ENCODE measurements at regions of chr12 and their contacts with region 1.

Region 1: DNA sequence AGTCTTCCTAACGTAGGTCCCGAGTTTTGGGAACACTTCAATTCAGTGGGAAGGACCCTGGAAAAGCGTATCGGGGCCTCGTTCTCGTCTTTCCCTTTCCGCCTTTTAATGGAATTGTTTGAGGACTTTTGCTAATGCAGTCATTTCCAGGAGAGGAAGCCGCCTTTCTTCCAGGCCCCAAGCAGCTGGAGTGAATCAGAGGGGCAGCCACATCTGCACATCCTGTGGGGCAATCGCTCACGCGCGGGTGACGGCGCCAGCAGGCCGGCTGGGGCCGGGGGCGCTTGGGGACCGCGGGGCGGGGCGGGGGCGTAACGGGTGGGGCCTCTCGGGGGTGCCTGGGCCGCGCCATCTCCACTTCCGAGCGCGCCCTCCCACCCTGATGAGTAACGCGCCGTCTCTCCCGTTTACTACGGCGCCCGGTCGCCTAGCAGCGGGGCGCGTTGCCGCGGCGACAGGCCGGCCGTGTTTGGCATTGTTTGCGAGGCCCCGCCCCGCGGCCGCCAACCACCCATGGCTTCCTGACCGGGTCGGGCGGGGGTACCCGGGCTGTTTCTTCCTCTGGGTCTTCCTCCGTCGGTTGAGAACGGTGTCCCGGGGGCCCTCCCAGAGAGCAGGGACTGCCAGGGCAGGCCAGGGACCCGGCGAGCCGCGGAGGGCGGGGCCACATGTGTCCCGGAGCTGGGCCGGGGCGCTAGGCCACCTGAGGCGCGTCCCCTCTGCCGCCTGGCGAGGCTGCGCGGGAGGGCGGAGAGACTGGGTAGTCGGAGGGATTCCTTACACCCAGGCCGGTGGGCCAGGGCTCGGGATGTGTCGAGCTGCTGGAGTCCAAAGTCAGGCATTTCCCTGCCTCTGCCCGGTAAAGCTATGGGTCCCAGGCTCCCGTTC is 2.3 kb downstream of the GSG1 start:
- DNase-seq: peak; percentile 92 to 96 (median 94)
- ATAC-seq: peak; percentile 93
- H3K4me3 ChIP-seq: peak overlapping the region; percentile 68
- H3K4me3 Mint-ChIP-seq: peak overlapping the region; percentile 82 to 87 (median 84)
- H3K27ac ChIP-seq: peak overlapping the region; percentile 92
- H3K27ac Mint-ChIP-seq: peak overlapping the region; percentile 85 to 99 (median 95)
- H3K4me1 ChIP-seq: peaks cover 6 to 32% of the 10 kb centered on the region in 2 donors
- H3K4me1 Mint-ChIP-seq: peaks cover 24 to 49% (median 43%) of the 10 kb centered on the region in 7 donors
- H3K27me3 ChIP-seq: no peaks in the 10 kb centered on the region
- H3K27me3 Mint-ChIP-seq: peaks cover 0 to 5% (median 0%) of the 10 kb centered on the region in 5 donors

Region 2: GRCh38 chr12:11545484-11546330 is 1555.4 kb before region 1 on chr12:
- CTCF ChIA-PET with region 1: no interaction called
- POLR2A ChIA-PET with region 1: no interaction called
- intact Hi-C with region 1: loop called in 1 of 2 experiments (anchors 5 kb)
- DNase-seq: peak in 8 of 9 donors; percentile 50 to 87 (median 81)
- ATAC-seq: peak; percentile 87
- H3K4me3 ChIP-seq: peak overlapping the region; percentile 50
- H3K4me3 Mint-ChIP-seq: peak overlapping the region; percentile 74 to 84 (median 80)
- H3K27ac ChIP-seq: peak overlapping the region; percentile 81
- H3K27ac Mint-ChIP-seq: peak overlapping the region; percentile 92 to 99 (median 96)
- H3K4me1 ChIP-seq: peaks cover 28 to 69% of the 10 kb centered on the region in 2 donors
- H3K4me1 Mint-ChIP-seq: peaks cover 31 to 88% (median 68%) of the 10 kb centered on the region in 7 donors
- H3K27me3 ChIP-seq: no peaks in the 10 kb centered on the region
- H3K27me3 Mint-ChIP-seq: peaks cover 0 to 5% (median 0%) of the 10 kb centered on the region in 5 donors

Region 3: DNA sequence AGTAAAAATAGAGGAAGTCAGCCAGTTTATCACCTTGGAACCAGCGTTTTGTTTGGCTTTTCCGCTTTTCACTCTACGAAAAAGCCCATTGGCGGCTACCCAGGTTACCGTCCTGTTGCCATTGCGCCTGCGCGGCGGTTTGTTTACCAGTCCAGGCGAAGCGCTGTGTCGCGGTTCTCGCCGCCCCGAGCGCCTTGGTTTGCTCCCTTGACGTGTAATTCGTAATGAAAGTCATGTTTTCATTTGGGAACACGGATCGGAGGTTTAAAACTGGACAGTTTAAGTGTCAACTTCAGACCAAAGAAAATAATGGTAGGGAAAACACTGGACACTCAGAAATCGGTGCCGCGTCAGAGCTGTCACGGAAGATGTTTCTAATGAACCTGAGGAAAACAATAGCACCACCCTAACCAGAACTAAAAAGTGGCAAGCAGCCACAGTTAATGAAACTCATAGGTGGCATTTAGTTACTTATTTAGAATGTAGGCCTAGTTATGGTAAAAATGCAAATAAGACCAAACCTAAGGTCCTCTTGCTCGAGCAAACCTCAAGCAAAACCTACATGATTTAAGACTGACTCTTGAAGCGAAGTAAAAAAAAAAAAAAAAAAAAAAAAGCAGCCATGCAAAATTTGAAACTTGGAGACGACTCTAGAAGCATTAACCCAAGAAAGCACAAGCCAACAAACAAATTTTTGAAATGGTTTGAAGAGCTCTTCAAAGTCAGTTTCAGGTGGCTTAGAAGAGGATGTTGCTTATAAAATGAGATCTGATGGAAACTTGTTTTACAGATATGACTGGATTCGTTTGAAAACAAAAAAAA is 404.4 kb before region 1 on chr12:
- CTCF ChIA-PET with region 1: no interaction called
- POLR2A ChIA-PET with region 1: no interaction called
- intact Hi-C with region 1: loop called in 1 of 2 experiments (anchors 1 kb)
- DNase-seq: peak; percentile 86 to 97 (median 92)
- ATAC-seq: peak; percentile 92
- H3K4me3 ChIP-seq: peak overlapping the region; percentile 63
- H3K4me3 Mint-ChIP-seq: peak overlapping the region; percentile 79 to 99 (median 95)
- H3K27ac ChIP-seq: peak overlapping the region; percentile 93
- H3K27ac Mint-ChIP-seq: peak overlapping the region; percentile 95 to 100 (median 100)
- H3K4me1 ChIP-seq: peaks cover 11 to 16% of the 10 kb centered on the region in 2 donors
- H3K4me1 Mint-ChIP-seq: peaks cover 24 to 63% (median 33%) of the 10 kb centered on the region in 7 donors
- H3K27me3 ChIP-seq: no peaks in the 10 kb centered on the region
- H3K27me3 Mint-ChIP-seq: no peaks in the 10 kb centered on the region

Region 4: GRCh38 chr12:12845025-12845787 is 255.9 kb before region 1 on chr12:
- CTCF ChIA-PET with region 1: no interaction called
- POLR2A ChIA-PET with region 1: no interaction called
- intact Hi-C with region 1: loop called in 1 of 2 experiments (anchors 5 kb)
- DNase-seq: no peak
- ATAC-seq: no peak
- H3K4me3 ChIP-seq: no peak overlapping the region
- H3K4me3 Mint-ChIP-seq: peak overlapping the region in 3 of 10 donors; percentile 32 to 56 (median 53)
- H3K27ac ChIP-seq: no peak overlapping the region
- H3K27ac Mint-ChIP-seq: peak overlapping the region in 7 of 9 donors; percentile 38 to 87 (median 78)
- H3K4me1 ChIP-seq: peaks cover 0 to 31% of the 10 kb centered on the region in 2 donors
- H3K4me1 Mint-ChIP-seq: peaks cover 14 to 50% (median 36%) of the 10 kb centered on the region in 7 donors
- H3K27me3 ChIP-seq: no peaks in the 10 kb centered on the region
- H3K27me3 Mint-ChIP-seq: no peaks in the 10 kb centered on the region

Region 5: DNA sequence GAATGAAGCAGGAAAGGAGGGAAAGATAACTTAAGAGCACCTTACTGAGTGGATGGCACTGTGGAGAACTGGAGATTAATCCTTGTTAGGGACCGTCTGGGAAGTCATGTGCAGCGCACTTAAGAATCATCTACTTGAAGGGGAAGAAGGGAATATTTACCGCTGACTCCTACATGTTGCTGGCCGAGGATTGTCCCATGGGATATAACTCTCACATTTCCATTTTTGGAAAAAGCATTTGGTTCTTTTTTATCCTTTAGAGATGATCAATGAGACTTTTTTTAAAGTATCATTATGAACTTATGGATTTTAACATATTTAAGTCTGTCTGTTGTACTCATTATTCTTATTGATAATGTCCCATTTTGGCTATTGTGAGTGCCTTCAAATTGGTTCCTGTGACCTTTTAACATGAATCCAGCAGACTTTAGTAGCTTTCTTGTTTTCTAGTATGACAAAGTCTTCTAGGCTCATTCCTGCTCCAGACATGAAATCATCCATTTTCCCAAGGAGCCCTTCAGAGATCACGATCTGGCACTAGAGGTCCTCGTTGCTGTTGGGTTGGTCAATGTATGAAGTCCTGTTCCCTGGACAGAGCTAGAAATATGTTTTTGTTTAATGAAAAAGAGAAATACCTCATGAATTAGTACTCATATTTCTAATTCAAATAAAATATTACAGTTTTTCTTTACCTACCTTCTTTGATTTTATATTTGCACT is 77.2 kb before region 1 on chr12:
- CTCF ChIA-PET with region 1: no interaction called
- POLR2A ChIA-PET with region 1: no interaction called
- intact Hi-C with region 1: no loop called
- DNase-seq: no peak
- ATAC-seq: peak; percentile 36
- H3K4me3 ChIP-seq: no peak overlapping the region
- H3K4me3 Mint-ChIP-seq: no peak overlapping the region
- H3K27ac ChIP-seq: no peak overlapping the region
- H3K27ac Mint-ChIP-seq: no peak overlapping the region
- H3K4me1 ChIP-seq: no peaks in the 10 kb centered on the region
- H3K4me1 Mint-ChIP-seq: no peaks in the 10 kb centered on the region
- H3K27me3 ChIP-seq: no peaks in the 10 kb centered on the region
- H3K27me3 Mint-ChIP-seq: peaks cover 3 to 30% (median 7%) of the 10 kb centered on the region in 5 donors

Region 6: DNA sequence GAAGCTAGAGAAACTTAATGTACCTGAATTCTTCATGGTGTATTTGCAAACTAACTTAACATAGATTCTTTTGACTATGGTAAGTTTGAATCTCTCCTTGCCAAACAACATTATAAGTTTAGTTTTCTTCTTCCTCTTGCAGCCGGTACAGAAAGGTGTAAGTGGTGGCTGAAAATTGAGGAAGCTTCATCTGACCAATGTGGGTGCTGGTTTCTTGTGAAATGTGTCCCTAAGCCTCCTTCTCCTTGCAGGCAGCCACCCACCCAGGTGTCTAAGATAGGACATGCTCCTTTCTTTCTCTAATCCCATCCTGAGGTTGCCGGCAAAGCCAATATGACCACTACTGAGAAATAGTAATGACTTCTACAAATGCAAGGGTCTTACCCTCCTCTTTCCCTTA is 18.3 kb before region 1 on chr12:
- CTCF ChIA-PET with region 1: no interaction called
- POLR2A ChIA-PET with region 1: no interaction called
- intact Hi-C with region 1: no loop called
- DNase-seq: no peak
- ATAC-seq: no peak
- H3K4me3 ChIP-seq: no peak overlapping the region
- H3K4me3 Mint-ChIP-seq: no peak overlapping the region
- H3K27ac ChIP-seq: no peak overlapping the region
- H3K27ac Mint-ChIP-seq: no peak overlapping the region
- H3K4me1 ChIP-seq: no peaks in the 10 kb centered on the region
- H3K4me1 Mint-ChIP-seq: peaks cover 0 to 3% (median 0%) of the 10 kb centered on the region in 7 donors
- H3K27me3 ChIP-seq: no peaks in the 10 kb centered on the region
- H3K27me3 Mint-ChIP-seq: no peaks in the 10 kb centered on the region

Region 7: GRCh38 chr12:13165617-13166041 is 64.5 kb after region 1 on chr12:
- CTCF ChIA-PET with region 1: interaction called, 6 read pairs
- POLR2A ChIA-PET with region 1: interaction called, 3 read pairs
- intact Hi-C with region 1: loop called in 1 of 2 experiments (anchors 1 kb)
- DNase-seq: peak; percentile 14 to 60 (median 46)
- ATAC-seq: peak; percentile 82
- H3K4me3 ChIP-seq: no peak overlapping the region
- H3K4me3 Mint-ChIP-seq: peak overlapping the region; percentile 5 to 63 (median 50)
- H3K27ac ChIP-seq: peak overlapping the region; percentile 1
- H3K27ac Mint-ChIP-seq: peak overlapping the region; percentile 11 to 82 (median 76)
- H3K4me1 ChIP-seq: peaks cover 13 to 24% of the 10 kb centered on the region in 2 donors
- H3K4me1 Mint-ChIP-seq: peaks cover 16 to 35% (median 23%) of the 10 kb centered on the region in 7 donors
- H3K27me3 ChIP-seq: no peaks in the 10 kb centered on the region
- H3K27me3 Mint-ChIP-seq: peaks cover 0 to 24% (median 0%) of the 10 kb centered on the region in 5 donors

Region 8: GRCh38 chr12:14167005-14167628 is 1066.0 kb after region 1 on chr12:
- CTCF ChIA-PET with region 1: no interaction called
- POLR2A ChIA-PET with region 1: no interaction called
- intact Hi-C with region 1: loop called in 1 of 2 experiments (anchors 2 kb)
- DNase-seq: peak in 6 of 9 donors; percentile 10 to 40 (median 30)
- ATAC-seq: no peak
- H3K4me3 ChIP-seq: no peak overlapping the region
- H3K4me3 Mint-ChIP-seq: peak overlapping the region in 1 of 10 donors; percentile 12
- H3K27ac ChIP-seq: no peak overlapping the region
- H3K27ac Mint-ChIP-seq: no peak overlapping the region
- H3K4me1 ChIP-seq: no peaks in the 10 kb centered on the region
- H3K4me1 Mint-ChIP-seq: peaks cover 0 to 6% (median 0%) of the 10 kb centered on the region in 7 donors
- H3K27me3 ChIP-seq: no peaks in the 10 kb centered on the region
- H3K27me3 Mint-ChIP-seq: peaks cover 6 to 16% (median 9%) of the 10 kb centered on the region in 5 donors

Measured in naive thymus-derived CD4-positive, alpha-beta T cell (primary cell).